ENCODE measurements at regions of chr7 and their contacts with region 1.

Region 1: DNA sequence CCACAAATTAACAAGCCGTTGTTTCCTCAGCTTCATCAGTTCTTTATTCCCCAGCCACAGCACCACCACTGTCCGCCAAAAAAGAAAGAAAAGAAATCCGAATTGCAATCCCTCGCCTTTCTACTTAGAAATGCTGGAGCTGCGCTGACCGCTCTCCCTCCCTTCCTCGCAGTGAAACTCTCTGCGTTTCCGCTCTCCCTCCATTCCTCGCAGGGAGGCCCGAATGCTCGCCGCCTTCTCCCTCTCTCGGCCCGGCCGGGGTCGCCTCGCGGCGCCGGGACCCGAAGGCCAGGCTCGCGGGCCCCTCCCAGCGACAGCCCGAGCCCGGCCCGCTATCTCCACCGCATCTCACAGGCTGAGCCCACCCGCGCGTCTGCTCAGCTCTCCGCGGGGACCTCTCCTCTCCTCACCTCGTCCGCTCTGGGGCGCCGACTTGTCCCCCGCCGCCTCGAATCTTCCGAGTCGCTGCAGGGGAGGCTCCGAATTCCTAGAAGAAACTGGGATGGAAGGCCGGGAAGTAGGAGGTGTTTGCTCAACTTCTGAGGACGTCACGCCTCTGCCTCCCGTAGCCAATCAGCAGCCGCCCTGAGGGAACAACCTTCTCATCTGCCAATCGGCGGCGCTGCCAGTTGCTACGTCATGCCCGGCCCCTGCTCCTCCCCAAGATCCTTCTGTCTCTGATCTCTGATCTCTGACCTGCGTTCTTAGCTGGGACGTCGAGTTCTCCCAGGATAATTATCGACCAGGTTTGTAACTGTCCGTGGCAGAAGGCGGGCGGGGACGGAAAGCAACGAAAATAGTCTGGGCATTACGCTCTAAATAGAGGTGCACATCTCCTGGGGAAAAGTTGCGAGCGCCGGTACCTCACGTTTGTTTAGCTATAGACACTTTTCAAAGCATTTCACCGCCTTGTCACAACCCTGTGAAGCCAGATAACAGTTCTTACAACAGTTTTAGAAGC is at the start of gene AASS:
- DNase-seq: peak; percentile 70 to 89
- ATAC-seq: peak; percentile 83 to 96 (median 94)
- H3K4me3 ChIP-seq: peak within 1 kb of the TSS; percentile 63
- H3K4me3 Mint-ChIP-seq: peak within 1 kb of the TSS; percentile 99
- H3K27ac ChIP-seq: peak within 1 kb of the TSS; percentile 47
- H3K27ac Mint-ChIP-seq: peak within 1 kb of the TSS; percentile 78 to 90
- H3K4me1 ChIP-seq: peaks cover 12% of the 10 kb centered on the region
- H3K4me1 Mint-ChIP-seq: peaks cover 19 to 20% of the 10 kb centered on the region in 2 donors
- H3K27me3 ChIP-seq: peaks cover 2% of the 10 kb centered on the region
- H3K27me3 Mint-ChIP-seq: peaks cover 10 to 22% of the 10 kb centered on the region in 2 donors
- CTCF ChIP-seq: no peak
- total RNA-seq, gene AASS: 1.6 to 2.4 (median 1.6) TPM

Region 2: GRCh38 chr7:120583899-120584586 is 1560.0 kb before region 1 on chr7:
- intact Hi-C with region 1: loop called (anchors 10 kb)
- DNase-seq: no peak
- ATAC-seq: no peak
- H3K4me3 ChIP-seq: no peak overlapping the region
- H3K4me3 Mint-ChIP-seq: no peak overlapping the region
- H3K27ac ChIP-seq: no peak overlapping the region
- H3K27ac Mint-ChIP-seq: no peak overlapping the region
- H3K4me1 ChIP-seq: no peaks in the 10 kb centered on the region
- H3K4me1 Mint-ChIP-seq: no peaks in the 10 kb centered on the region
- H3K27me3 ChIP-seq: no peaks in the 10 kb centered on the region
- H3K27me3 Mint-ChIP-seq: no peaks in the 10 kb centered on the region
- CTCF ChIP-seq: no peak

Region 3: GRCh38 chr7:122511268-122511667 is 367.2 kb after region 1 on chr7:
- intact Hi-C with region 1: no loop called
- DNase-seq: no peak
- ATAC-seq: no peak
- H3K4me3 ChIP-seq: no peak overlapping the region
- H3K4me3 Mint-ChIP-seq: no peak overlapping the region
- H3K27ac ChIP-seq: no peak overlapping the region
- H3K27ac Mint-ChIP-seq: no peak overlapping the region
- H3K4me1 ChIP-seq: no peaks in the 10 kb centered on the region
- H3K4me1 Mint-ChIP-seq: no peaks in the 10 kb centered on the region
- H3K27me3 ChIP-seq: no peaks in the 10 kb centered on the region
- H3K27me3 Mint-ChIP-seq: no peaks in the 10 kb centered on the region
- CTCF ChIP-seq: no peak

Region 4: GRCh38 chr7:123041101-123041500 is 897.1 kb after region 1 on chr7:
- intact Hi-C with region 1: no loop called
- DNase-seq: no peak
- ATAC-seq: no peak
- H3K4me3 ChIP-seq: no peak overlapping the region
- H3K4me3 Mint-ChIP-seq: no peak overlapping the region
- H3K27ac ChIP-seq: no peak overlapping the region
- H3K27ac Mint-ChIP-seq: no peak overlapping the region
- H3K4me1 ChIP-seq: no peaks in the 10 kb centered on the region
- H3K4me1 Mint-ChIP-seq: no peaks in the 10 kb centered on the region
- H3K27me3 ChIP-seq: no peaks in the 10 kb centered on the region
- H3K27me3 Mint-ChIP-seq: no peaks in the 10 kb centered on the region
- CTCF ChIP-seq: no peak

Region 5: GRCh38 chr7:123289200-123289599 is 1145.2 kb after region 1 on chr7:
- intact Hi-C with region 1: no loop called
- DNase-seq: no peak
- ATAC-seq: no peak
- H3K4me3 ChIP-seq: no peak overlapping the region
- H3K4me3 Mint-ChIP-seq: no peak overlapping the region
- H3K27ac ChIP-seq: no peak overlapping the region
- H3K27ac Mint-ChIP-seq: no peak overlapping the region
- H3K4me1 ChIP-seq: no peaks in the 10 kb centered on the region
- H3K4me1 Mint-ChIP-seq: no peaks in the 10 kb centered on the region
- H3K27me3 ChIP-seq: no peaks in the 10 kb centered on the region
- H3K27me3 Mint-ChIP-seq: no peaks in the 10 kb centered on the region
- CTCF ChIP-seq: no peak